Esophagus squamous epithelium (tissue), 5 donors: ENCODE measurements at regions of chr17 and their contacts with region 1.

Region 1: DNA sequence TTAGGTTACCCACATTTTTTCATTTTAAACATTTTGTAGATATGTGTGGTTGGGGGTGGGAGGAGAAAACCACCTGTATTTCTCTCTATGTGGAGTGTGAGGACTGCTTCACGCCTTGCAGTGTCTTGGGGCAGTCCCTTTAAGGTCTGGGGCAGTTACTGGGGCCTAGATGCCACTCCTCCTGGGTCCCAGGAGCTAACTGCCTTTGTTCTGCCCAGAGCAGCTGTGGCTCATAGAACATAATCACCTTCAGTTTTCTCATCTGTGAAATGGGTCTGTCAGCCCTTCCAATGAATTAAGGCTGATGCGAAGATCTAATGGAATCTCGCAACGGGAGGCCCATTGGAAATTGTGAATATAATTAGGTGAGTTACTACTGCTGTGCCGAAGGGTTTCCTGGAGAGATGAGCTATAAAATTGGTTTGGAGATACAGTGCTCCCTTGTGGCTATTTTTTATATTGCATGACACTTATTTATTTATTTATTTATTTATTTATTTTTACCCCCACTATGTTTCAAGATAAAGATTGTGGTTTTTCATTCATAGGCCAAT is 22.9 kb downstream of the DHRS7C start:
- DNase-seq: no peak
- H3K4me3 ChIP-seq: no peak overlapping the region
- H3K27ac ChIP-seq: no peak overlapping the region
- H3K4me1 ChIP-seq: no peaks in the 10 kb centered on the region
- H3K27me3 ChIP-seq: peaks cover 0 to 29% (median 0%) of the 10 kb centered on the region in 4 donors
- CTCF ChIP-seq: peak; percentile 14 to 77 (median 37)
- POLR2A ChIP-seq: no peak

Region 2: GRCh38 chr17:9729735-9730420 is 38.6 kb before region 1 on chr17:
- intact Hi-C with region 1: loop called (anchors 5 kb)
- DNase-seq: no peak
- H3K4me3 ChIP-seq: no peak overlapping the region
- H3K27ac ChIP-seq: peak overlapping the region in 3 of 4 donors; percentile 15 to 65 (median 16)
- H3K4me1 ChIP-seq: peaks cover 0 to 5% (median 0%) of the 10 kb centered on the region in 3 donors
- H3K27me3 ChIP-seq: peaks cover 0 to 8% (median 0%) of the 10 kb centered on the region in 4 donors
- CTCF ChIP-seq: no peak
- POLR2A ChIP-seq: no peak